Vagina (tissue), 2 donors: ENCODE measurements at regions of chr6 and their contacts with region 1.

Region 1: GRCh38 chr6:32868257-32868788 is 14.3 kb downstream of the PSMB9 start:
- DNase-seq: no peak
- H3K4me3 ChIP-seq: no peak overlapping the region
- H3K27ac ChIP-seq: no peak overlapping the region
- H3K4me1 ChIP-seq: no peaks in the 10 kb centered on the region
- H3K27me3 ChIP-seq: no peaks in the 10 kb centered on the region
- CTCF ChIP-seq: peak; percentile 87 to 94 (median 92)
- POLR2A ChIP-seq: no peak

Region 2: GRCh38 chr6:32825966-32826365 is 42.4 kb before region 1 on chr6:
- intact Hi-C with region 1: loop called (anchors 5 kb)
- DNase-seq: no peak
- H3K4me3 ChIP-seq: no peak overlapping the region
- H3K27ac ChIP-seq: no peak overlapping the region
- H3K4me1 ChIP-seq: no peaks in the 10 kb centered on the region
- H3K27me3 ChIP-seq: no peaks in the 10 kb centered on the region
- CTCF ChIP-seq: peak in 2 of 3 experiments; percentile 9 to 47
- POLR2A ChIP-seq: no peak